ENCODE measurements at regions of chr3 and their contacts with region 1.

Region 1: GRCh38 chr3:44954962-44955361 is 21.0 kb downstream of the ZDHHC3 start:
- DNase-seq: peak; percentile 94
- ATAC-seq: peak; percentile 99
- H3K4me3 ChIP-seq: no peak overlapping the region
- H3K27ac ChIP-seq: peak overlapping the region; percentile 72
- H3K4me1 ChIP-seq: peaks cover 45% of the 10 kb centered on the region
- H3K27me3 ChIP-seq: no peaks in the 10 kb centered on the region
- CTCF ChIP-seq: no peak

Region 2: GRCh38 chr3:44913868-44914468 is 41.0 kb before region 1 on chr3:
- CTCF ChIA-PET with region 1: interaction called, 5 read pairs
- POLR2A ChIA-PET with region 1: no interaction called
- intact Hi-C with region 1: loop called (anchors 2 kb)
- DNase-seq: peak; percentile 87
- ATAC-seq: peak; percentile 72
- H3K4me3 ChIP-seq: no peak overlapping the region
- H3K27ac ChIP-seq: no peak overlapping the region
- H3K4me1 ChIP-seq: no peaks in the 10 kb centered on the region
- H3K27me3 ChIP-seq: no peaks in the 10 kb centered on the region
- CTCF ChIP-seq: peak; percentile 93

Region 3: DNA sequence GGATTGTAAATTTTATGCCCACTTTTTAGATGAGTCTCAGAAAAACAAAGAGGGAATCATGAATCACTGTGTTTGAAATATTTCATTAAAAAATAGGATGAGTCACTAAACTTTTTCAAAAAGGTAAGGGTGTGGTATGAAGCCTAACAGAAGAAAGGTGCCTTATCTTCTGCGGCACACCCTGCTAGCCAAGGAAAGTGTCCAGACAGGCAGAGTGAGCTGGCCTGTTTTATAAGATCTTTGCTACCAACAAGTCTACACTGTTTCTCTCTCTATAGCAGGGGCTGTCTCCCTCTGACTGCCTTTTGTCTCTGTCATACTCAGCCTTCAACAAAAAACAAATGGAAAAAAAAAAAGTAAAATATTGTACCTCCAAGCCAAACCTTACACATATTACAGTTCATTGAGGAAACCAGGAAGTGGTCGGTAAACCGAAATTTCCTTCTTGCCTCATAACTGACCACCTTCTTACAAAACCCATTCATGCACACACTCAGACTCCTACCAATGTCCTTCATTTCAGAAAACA is 11.9 kb after region 1 on chr3:
- CTCF ChIA-PET with region 1: no interaction called
- POLR2A ChIA-PET with region 1: interaction called, 3 read pairs
- intact Hi-C with region 1: loop called (anchors 1 kb)
- DNase-seq: peak; percentile 95
- ATAC-seq: peak; percentile 76
- H3K4me3 ChIP-seq: peak overlapping the region; percentile 39; the same call in 1 of the 2 replicates
- H3K27ac ChIP-seq: peak overlapping the region; percentile 89
- H3K4me1 ChIP-seq: peaks cover 96% of the 10 kb centered on the region
- H3K27me3 ChIP-seq: no peaks in the 10 kb centered on the region
- CTCF ChIP-seq: no peak

Region 4: DNA sequence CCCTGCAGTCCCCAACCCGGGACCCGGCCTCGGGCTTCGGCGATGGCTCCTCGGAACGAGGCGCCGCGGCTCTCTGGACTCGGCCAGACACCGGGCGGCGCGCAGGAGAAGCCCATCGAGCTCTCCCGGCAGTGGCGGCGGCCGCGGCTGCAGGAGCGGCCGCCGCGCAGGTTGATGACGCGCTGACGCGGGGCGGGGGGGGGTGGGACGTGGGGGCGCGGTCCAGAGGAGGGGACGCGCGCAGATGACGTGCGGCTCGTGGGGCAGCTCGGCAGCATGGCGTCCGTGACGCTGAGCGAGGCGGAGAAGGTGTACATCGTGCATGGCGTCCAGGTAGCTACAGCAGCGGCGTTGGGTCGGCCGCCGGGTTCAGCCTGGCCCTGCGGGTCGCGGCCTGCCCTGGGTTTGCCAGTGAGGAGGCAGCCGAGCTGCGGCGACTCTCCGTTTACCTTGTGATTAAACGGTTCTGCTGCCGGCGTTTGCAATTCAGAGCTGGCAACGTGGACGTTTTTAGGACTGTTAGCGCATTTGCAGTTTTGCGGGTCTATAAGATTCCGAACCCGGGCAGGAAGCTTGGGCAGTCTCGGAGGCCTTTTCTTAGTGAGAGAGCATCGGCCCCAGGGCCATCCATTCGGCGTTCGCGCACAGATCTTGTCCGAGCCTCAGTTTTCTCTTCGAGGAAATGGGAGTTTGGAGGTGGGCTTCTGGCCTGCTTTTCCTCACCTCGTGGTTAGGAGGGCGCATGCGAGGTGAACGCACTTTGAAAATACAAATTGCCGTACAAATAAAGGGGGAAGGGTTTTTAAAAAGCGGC is 21.2 kb after region 1 on chr3 and contains the starts of genes EXOSC7 and ZDHHC3:
- CTCF ChIA-PET with region 1: no interaction called
- POLR2A ChIA-PET with region 1: interaction called, 10 read pairs
- intact Hi-C with region 1: no loop called
- DNase-seq: peak; percentile 85
- ATAC-seq: peak; percentile 68
- H3K4me3 ChIP-seq: peak within 1 kb of the TSS; percentile 76
- H3K27ac ChIP-seq: peak within 1 kb of the TSS; percentile 69
- H3K4me1 ChIP-seq: peaks cover 41% of the 10 kb centered on the region
- H3K27me3 ChIP-seq: no peaks in the 10 kb centered on the region
- CTCF ChIP-seq: no peak
- total RNA-seq, gene EXOSC7: 79.8 and 81.5 TPM in 2 replicates
- total RNA-seq, gene ZDHHC3: 122 and 153 TPM in 2 replicates

Region 5: DNA sequence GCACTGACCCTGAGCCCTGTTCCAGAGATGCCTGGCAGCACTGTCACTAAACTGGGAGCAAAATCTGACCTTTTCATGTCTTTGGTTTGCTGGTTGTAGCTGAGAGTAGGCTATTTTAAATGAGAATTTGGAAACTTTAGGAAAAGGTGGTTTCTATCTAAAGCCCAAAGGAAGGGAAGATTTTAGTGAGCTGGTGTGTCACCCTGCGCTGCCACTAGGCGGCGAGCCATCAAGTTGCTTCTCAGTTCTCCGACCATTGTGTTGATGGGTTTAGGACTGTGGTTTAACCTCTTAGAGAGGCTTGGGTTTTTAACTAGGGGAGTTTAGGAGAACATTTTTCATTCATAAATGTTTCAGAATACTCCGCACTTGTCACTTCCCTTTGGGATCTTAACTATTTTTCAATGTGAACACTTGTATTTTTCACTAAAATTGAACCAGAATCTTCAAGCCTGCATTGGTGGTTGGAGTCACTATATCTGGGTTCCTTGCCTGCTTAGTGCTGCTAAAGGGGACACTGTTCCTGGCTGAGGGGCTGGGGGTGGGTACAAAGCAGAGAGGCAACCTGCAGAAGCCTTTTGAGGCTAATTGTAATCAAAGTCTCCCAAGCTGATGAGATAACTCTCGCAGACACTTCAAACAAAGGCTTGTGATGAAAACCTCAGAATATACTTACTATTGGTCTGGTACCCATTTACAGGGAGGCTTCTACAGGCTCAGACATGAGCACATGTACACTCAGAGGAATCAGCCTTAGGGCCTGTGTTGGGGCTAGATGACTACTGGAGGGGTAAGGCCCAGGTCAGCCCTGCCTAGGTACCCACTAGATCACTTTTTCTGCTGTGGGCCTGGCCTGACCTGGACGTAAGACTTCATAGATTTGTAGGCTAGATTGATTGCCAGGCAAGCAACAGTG is 37.9 kb after region 1 on chr3:
- CTCF ChIA-PET with region 1: no interaction called
- POLR2A ChIA-PET with region 1: no interaction called
- intact Hi-C with region 1: loop called (anchors 2 kb)
- DNase-seq: peak; percentile 38
- ATAC-seq: no peak
- H3K4me3 ChIP-seq: no peak overlapping the region
- H3K27ac ChIP-seq: peak overlapping the region; percentile 68
- H3K4me1 ChIP-seq: peaks cover 42% of the 10 kb centered on the region
- H3K27me3 ChIP-seq: no peaks in the 10 kb centered on the region
- CTCF ChIP-seq: peak; percentile 89